Psoas muscle (tissue), 8 donors: ENCODE measurements at regions of chr2 and their contacts with region 1.

Region 1: DNA sequence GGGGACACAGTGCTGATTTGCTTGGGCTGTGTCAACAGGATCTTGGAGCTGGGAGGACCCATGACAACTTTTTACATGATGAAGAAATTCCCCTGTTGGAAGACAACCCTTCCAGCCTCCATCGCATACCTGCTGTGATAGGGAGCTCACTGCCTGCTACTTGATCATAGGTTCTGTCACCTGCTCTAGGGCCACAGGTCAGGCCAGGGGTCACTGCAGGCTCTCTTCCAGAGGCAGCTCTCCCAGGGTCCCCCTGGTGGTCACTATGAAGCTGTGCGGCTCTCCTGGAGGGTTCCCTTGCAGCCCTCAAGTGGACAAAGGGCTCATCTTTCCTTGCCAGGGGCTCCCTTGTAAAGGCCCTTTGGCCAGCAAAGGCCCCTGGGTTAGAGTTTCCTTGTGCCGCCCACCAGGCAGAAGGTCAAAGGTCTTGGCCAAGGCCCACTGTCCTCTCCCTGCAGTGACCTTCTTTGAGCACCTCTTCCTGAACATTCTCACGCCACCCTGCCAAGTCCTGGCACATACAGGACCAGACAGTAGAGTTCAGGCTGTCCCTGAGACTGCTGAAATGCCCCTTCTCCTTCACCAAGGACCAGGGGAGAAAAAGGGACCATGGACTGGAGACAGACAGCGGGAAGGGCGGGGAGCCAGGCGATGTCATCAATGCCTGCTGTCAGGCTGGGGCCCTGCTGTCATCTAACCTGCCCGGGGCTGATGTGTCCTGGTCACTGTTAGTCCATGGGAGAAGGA is 345.1 kb downstream of the DYSF start:
- DNase-seq: no peak
- ATAC-seq: peak; percentile 66 to 79 (median 73)
- H3K4me3 ChIP-seq: no peak overlapping the region
- H3K27ac ChIP-seq: no peak overlapping the region
- H3K4me1 ChIP-seq: no peaks in the 10 kb centered on the region
- H3K27me3 ChIP-seq: no peaks in the 10 kb centered on the region
- CTCF ChIP-seq: peak; percentile 63

Region 2: DNA sequence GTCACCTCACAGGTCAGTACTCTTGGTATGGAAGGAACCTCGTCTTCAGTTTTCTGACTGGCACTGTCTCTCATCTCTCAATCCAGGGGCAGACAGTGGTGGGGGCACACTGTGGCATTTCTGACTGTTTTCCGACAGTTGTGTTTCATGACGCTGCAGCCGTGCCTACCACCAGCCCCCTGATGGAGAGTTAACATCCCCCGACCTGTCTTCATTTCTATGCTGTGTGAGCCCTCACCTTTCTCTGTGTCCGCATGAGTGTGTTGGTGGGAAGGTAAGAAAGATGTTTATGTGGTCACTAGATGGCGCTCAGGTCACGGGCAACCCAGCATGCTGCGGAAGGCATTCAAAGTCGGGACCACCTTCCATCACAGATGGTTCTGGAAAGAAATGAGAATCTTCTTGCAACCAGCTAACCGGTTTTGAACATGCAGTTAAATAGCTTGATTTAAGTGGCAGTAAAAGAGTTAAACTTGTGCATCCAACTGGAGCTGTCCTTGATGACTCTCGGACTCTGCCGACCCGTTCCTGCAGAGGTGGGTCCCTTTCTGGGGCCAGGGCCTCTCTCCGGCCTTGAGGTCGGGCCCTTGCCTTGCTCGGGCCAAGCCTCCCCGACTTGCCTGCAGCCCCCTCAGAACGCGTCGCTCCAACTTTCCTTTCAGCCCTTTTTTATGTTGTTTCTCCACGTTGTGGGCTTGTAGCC is 252.7 kb before region 1 on chr2:
- intact Hi-C with region 1: loop called (anchors 5 kb)
- DNase-seq: peak in 1 of 2 donors; percentile 66
- ATAC-seq: peak; percentile 34 to 76 (median 60)
- H3K4me3 ChIP-seq: peak overlapping the region; percentile 22
- H3K27ac ChIP-seq: peak overlapping the region; percentile 55
- H3K4me1 ChIP-seq: peaks cover 5% of the 10 kb centered on the region
- H3K27me3 ChIP-seq: no peaks in the 10 kb centered on the region
- CTCF ChIP-seq: peak; percentile 61

Region 3: GRCh38 chr2:71882949-71883472 is 84.6 kb after region 1 on chr2:
- intact Hi-C with region 1: loop called in 1 of 2 experiments (anchors 5 kb)
- DNase-seq: peak; percentile 93 to 97
- ATAC-seq: peak; percentile 81 to 89 (median 85)
- H3K4me3 ChIP-seq: no peak overlapping the region
- H3K27ac ChIP-seq: peak overlapping the region; percentile 71
- H3K4me1 ChIP-seq: peaks cover 41% of the 10 kb centered on the region
- H3K27me3 ChIP-seq: no peaks in the 10 kb centered on the region
- CTCF ChIP-seq: no peak

Region 4: GRCh38 chr2:71989671-71990070 is 191.2 kb after region 1 on chr2:
- intact Hi-C with region 1: loop called (anchors 2 to 5 kb)
- DNase-seq: no peak
- ATAC-seq: no peak
- H3K4me3 ChIP-seq: no peak overlapping the region
- H3K27ac ChIP-seq: no peak overlapping the region
- H3K4me1 ChIP-seq: no peaks in the 10 kb centered on the region
- H3K27me3 ChIP-seq: no peaks in the 10 kb centered on the region
- CTCF ChIP-seq: no peak

Region 5: GRCh38 chr2:72150157-72150865 is 351.9 kb after region 1 on chr2:
- intact Hi-C with region 1: loop called (anchors 2 to 5 kb)
- DNase-seq: peak; percentile 66 to 83
- ATAC-seq: peak; percentile 82 to 89 (median 86)
- H3K4me3 ChIP-seq: peak overlapping the region; percentile 73
- H3K27ac ChIP-seq: no peak overlapping the region
- H3K4me1 ChIP-seq: peaks cover 37% of the 10 kb centered on the region
- H3K27me3 ChIP-seq: peaks cover 0 to 53% (median 22%) of the 10 kb centered on the region in 3 donors
- CTCF ChIP-seq: peak; percentile 88